CD14-positive monocyte (primary cell): ENCODE measurements at regions of chrX and their contacts with region 1.

Region 1: DNA sequence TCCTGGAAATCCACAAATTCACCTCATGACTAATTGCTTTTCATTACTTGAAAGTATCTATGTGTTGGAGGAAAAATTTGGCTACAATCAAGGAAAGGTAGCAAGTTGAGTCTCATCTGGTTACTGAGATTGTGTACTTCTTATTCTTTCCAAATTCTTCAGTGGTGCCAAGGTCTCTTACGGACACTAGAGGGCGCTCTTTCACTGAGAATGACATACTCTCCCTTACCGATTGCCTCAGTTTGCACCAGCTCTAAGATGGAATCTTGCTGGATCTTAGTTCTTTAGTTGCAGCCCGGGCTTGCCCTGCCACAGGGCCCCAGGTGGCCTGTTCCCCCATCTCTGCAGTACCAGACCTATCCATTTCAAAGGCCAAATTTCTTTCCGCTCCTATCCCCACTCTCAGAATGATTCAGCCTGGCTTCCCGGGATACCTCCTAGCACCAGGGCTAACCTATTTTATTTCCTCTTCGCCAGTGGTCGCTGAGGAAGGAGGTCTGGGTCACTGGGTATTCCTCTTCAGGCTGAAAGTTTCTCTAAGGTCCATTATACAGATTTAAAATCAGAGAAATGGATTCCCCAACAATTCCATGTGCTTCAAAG is 24.6 kb upstream of the GPR50 start:
- DNase-seq: peak; percentile 8 to 32 (median 22)
- H3K4me3 ChIP-seq: no peak overlapping the region
- H3K4me3 Mint-ChIP-seq: no peak overlapping the region
- H3K27ac ChIP-seq: no peak overlapping the region
- H3K27ac Mint-ChIP-seq: no peak overlapping the region
- H3K4me1 ChIP-seq: no peaks in the 10 kb centered on the region
- H3K4me1 Mint-ChIP-seq: no peaks in the 10 kb centered on the region
- H3K27me3 ChIP-seq: peaks cover 0 to 8% of the 10 kb centered on the region in 2 donors
- H3K27me3 Mint-ChIP-seq: peaks cover 0 to 20% (median 7%) of the 10 kb centered on the region in 3 donors
- CTCF ChIP-seq: peak; percentile 76

Region 2: DNA sequence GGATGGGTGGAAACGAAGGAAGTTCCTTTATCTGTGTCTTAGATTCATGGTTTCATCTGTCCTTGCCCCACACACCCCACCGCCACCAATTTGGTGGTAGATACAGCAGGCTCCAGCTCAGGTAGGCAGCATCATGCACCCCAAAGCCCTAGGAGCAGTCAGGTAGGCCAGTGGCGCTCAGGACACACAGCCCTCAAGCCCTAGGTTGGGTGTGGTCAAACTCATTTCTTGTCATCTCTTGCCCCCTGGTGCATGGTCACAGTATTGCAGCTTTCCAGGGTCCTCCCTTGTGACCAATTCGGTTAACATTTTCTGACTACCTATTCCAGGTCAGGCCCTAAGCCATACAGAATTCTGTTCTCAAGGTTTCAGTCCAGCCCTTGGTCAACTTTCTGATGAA is 529.0 kb after region 1 on chrX:
- intact Hi-C with region 1: loop called (anchors 5 kb)
- DNase-seq: peak in 2 of 3 donors; percentile 0 to 6
- H3K4me3 ChIP-seq: no peak overlapping the region
- H3K4me3 Mint-ChIP-seq: no peak overlapping the region
- H3K27ac ChIP-seq: no peak overlapping the region
- H3K27ac Mint-ChIP-seq: no peak overlapping the region
- H3K4me1 ChIP-seq: no peaks in the 10 kb centered on the region
- H3K4me1 Mint-ChIP-seq: peaks cover 4% of the 10 kb centered on the region
- H3K27me3 ChIP-seq: peaks cover 0 to 3% of the 10 kb centered on the region in 2 donors
- H3K27me3 Mint-ChIP-seq: peaks cover 3 to 10% (median 5%) of the 10 kb centered on the region in 3 donors
- CTCF ChIP-seq: peak; percentile 65